Left colon (tissue), 2 donors: ENCODE measurements at regions of chrX and their contacts with region 1.

Region 1: GRCh38 chrX:11533211-11533651 is 132.5 kb downstream of the ARHGAP6 start:
- DNase-seq: no peak
- ATAC-seq: peak; percentile 99

Region 2: GRCh38 chrX:11143931-11144678 is 389.1 kb before region 1 on chrX:
- intact Hi-C with region 1: loop called in 1 of 2 experiments (anchors 5 kb)
- DNase-seq: peak; percentile 45 to 56
- ATAC-seq: peak; percentile 87

Region 3: GRCh38 chrX:11724122-11725017 is 191.1 kb after region 1 on chrX:
- intact Hi-C with region 1: loop called in 1 of 2 experiments (anchors 10 kb)
- DNase-seq: no peak
- ATAC-seq: peak; percentile 37

Region 4: GRCh38 chrX:11770320-11770719 is 237.1 kb after region 1 on chrX:
- intact Hi-C with region 1: loop called in 1 of 2 experiments (anchors 5 kb)
- DNase-seq: peak in 1 of 2 donors; percentile 27
- ATAC-seq: peak; percentile 80